ENCODE measurements at regions of chr6 and their contacts with region 1.

Region 1: GRCh38 chr6:106085984-106086813 is at the start of gene PRDM1:
- DNase-seq: peak; percentile 72
- ATAC-seq: peak; percentile 51 to 80 (median 73)
- H3K4me3 ChIP-seq: peak within 1 kb of the TSS; percentile 39 to 69 (median 56)
- H3K27ac ChIP-seq: peak within 1 kb of the TSS; percentile 33 to 91 (median 68)
- H3K4me1 ChIP-seq: peaks cover 0 to 78% (median 20%) of the 10 kb centered on the region in 9 donors
- H3K27me3 ChIP-seq: peaks cover 0 to 64% (median 37%) of the 10 kb centered on the region in 7 donors
- CTCF ChIP-seq: peak in 2 of 9 donors; percentile 26 to 29
- total RNA-seq, gene PRDM1: 0.47 to 11.2 (median 2.1) TPM

Region 2: DNA sequence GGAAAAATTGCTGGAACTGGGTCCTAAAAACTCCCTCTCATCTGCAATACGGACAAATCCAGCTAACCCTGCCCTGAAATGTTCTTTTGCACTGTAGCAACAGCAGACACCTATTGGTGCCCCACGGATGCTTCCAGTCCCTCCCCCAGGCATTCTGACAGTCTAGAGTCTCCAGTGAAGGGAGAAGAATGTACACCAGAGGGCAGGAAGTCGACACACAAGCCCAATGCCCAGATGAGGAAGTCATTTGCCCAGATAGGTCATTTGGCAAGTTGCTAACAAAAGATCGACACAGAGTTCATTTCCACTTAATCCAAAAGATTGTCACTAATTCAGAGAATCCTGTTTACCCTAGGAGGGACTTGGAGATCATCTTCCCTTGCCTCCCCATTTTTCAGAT is 293.1 kb before region 1 on chr6:
- intact Hi-C with region 1: loop called in 1 of 10 experiments (anchors 10 kb)
- DNase-seq: no peak
- ATAC-seq: peak in 5 of 8 donors; percentile 44 to 76 (median 59)
- H3K4me3 ChIP-seq: no peak overlapping the region
- H3K27ac ChIP-seq: peak overlapping the region in 1 of 10 donors; percentile 71
- H3K4me1 ChIP-seq: peaks cover 0 to 52% (median 9%) of the 10 kb centered on the region in 9 donors
- H3K27me3 ChIP-seq: no peaks in the 10 kb centered on the region
- CTCF ChIP-seq: peak in 3 of 9 donors; percentile 16 to 38 (median 27)

Region 3: GRCh38 chr6:106039836-106040592 is 46.2 kb before region 1 on chr6:
- intact Hi-C with region 1: no loop called
- DNase-seq: no peak
- ATAC-seq: no peak
- H3K4me3 ChIP-seq: no peak overlapping the region
- H3K27ac ChIP-seq: no peak overlapping the region
- H3K4me1 ChIP-seq: no peaks in the 10 kb centered on the region
- H3K27me3 ChIP-seq: peaks cover 0 to 10% (median 0%) of the 10 kb centered on the region in 7 donors
- CTCF ChIP-seq: no peak

Region 4: DNA sequence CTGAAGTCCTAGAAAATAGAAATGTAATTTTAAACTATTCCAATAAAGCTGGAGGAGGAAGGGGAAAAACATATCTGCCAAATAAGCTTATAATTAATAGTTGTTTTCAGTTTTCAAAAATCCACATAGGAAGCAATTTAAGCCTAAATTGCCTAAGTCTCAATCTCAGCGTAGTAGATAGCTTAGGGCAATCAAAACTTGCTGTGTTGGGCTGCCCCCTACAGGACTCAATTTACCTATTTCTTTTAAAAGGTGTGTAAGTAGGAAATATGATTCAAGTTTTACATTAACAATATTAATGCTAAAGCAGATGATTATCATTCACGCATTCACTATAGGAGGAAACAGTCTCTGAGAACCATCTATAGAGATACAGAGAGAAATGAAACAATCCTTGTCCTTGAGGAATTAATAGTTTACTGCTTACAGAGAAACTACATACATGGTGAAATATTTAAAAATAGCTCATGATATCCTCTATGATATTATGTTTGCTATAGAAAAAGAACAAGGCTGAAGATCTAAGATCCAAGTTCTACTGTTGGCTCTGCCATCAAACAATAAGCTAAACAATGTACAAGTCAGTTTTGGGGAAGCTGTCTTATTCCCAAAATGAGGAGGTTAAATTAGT is 137.2 kb after region 1 on chr6:
- intact Hi-C with region 1: loop called in 4 of 10 experiments (anchors 10 kb)
- DNase-seq: peak in 1 of 2 donors; percentile 66
- ATAC-seq: peak in 5 of 8 donors; percentile 62 to 75 (median 63)
- H3K4me3 ChIP-seq: no peak overlapping the region
- H3K27ac ChIP-seq: no peak overlapping the region
- H3K4me1 ChIP-seq: peaks cover 0 to 10% (median 0%) of the 10 kb centered on the region in 9 donors
- H3K27me3 ChIP-seq: no peaks in the 10 kb centered on the region
- CTCF ChIP-seq: peak; percentile 40 to 76 (median 66)

Region 5: DNA sequence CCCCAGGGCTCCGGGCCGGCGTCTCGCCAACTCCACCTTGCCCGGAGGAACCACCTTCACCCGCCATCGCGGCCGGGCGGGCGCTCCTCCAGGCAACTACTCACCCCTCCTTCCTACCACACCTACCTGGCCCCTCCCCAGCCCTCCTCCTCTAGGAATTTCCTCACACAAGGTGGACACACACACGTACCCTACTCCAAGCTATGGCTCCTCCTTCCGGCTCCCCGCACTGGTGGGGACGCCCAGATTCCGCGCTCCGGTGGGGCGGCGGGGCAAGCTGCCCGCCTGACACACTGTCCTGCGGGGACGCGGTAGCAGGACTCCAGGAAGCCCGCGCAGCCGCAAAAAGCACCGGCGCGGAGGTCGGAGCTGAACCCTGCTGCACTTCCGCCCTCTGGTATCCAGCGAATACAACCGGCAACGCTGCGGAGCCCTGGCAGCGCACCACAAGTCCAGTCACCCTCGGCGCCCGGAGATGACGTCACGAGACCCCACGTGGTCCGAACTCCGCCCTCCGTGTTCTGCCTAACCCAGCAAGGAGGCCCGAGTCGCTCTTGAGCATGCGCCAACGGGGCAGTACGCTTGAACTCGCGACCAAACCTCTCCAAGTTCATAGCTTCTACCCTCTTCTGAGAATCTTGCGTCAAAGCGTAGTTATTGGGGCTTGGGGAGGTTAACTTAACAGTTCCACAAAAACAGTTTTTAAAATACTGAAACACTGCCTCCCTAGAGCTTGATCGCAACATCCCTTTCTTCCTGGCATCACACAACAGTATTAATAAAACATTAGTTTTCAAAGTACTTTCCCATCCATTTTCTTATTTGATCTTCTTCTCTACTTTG is 239.4 kb after region 1 on chr6 and contains the start of gene ATG5:
- intact Hi-C with region 1: loop called in 1 of 10 experiments (anchors 10 kb)
- DNase-seq: peak; percentile 99 to 100
- ATAC-seq: peak; percentile 98 to 100 (median 99)
- H3K4me3 ChIP-seq: peak within 1 kb of the TSS; percentile 63 to 94 (median 87)
- H3K27ac ChIP-seq: peak within 1 kb of the TSS; percentile 1 to 96 (median 88)
- H3K4me1 ChIP-seq: peaks cover 0 to 26% (median 17%) of the 10 kb centered on the region in 9 donors
- H3K27me3 ChIP-seq: peaks cover 0 to 13% (median 4%) of the 10 kb centered on the region in 7 donors
- CTCF ChIP-seq: no peak
- total RNA-seq, gene ATG5: 12.6 to 18.0 (median 15.4) TPM